HepG2 (cell line): ENCODE measurements at regions of chr3 and their contacts with region 1.

Region 1: DNA sequence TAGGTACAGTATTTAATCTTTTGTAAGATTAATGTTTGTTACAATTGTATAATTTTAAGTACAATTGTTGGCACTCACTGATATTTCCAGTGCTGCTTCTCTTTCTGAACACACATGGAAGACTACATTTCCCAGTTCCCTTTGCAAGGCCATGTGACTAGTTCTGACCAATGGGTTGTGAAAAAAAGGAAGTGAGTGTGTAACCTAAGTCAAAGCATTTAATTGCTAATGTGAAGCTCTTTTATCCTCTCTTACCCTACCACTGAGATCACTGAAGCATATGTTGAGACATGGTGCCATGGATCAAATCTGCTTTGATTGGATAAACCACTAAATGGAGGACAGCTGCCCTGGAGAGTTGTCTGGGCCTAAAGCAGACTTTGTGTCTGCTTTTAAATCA is 83.9 kb upstream of the PLXND1 start:
- DNase-seq: peak; percentile 78
- ATAC-seq: peak; percentile 66
- H3K4me3 ChIP-seq: no peak overlapping the region
- H3K27ac ChIP-seq: no peak overlapping the region
- H3K4me1 ChIP-seq: peaks cover 46% of the 10 kb centered on the region
- H3K27me3 ChIP-seq: no peaks in the 10 kb centered on the region; a peak in 1 of 5 replicates
- CTCF ChIP-seq: no peak
- EP300 ChIP-seq: no peak
- POLR2A ChIP-seq: no peak
- RAD21 ChIP-seq: no peak

Region 2: DNA sequence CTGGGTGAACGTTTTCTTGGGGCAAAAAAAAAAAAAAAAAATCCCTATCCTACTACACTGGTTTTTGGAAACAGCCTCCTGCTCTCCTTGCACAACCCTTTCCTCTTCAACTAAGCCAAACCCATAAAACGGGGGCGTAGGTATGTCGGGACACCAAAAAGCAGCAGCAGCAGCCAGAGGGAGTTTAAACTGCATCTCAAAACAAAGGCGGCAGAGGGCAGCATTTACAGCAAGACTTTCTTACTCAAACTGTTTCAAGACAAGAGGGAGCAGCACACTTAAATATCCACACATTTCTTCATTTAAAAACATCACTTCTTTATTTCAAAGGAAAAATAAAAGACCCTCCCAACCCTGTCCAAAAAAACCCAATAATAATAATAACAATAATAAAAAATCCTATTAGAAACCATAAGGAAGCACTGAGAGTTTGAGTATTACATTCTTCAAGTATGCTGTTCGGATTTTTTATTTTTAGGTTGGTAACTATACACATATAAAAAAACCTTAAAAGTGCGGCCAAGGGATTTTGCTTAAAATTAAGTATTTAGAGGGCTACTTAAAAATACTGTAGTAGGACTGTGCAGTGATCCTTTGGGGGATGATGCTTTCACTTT is 40.0 kb before region 1 on chr3:
- CTCF ChIA-PET with region 1: no interaction called
- POLR2A ChIA-PET with region 1: interaction called, 3 read pairs
- in situ Hi-C with region 1: no loop called
- intact Hi-C with region 1: loop called (anchors 5 kb)
- DNase-seq: peak; percentile 48
- ATAC-seq: no peak
- H3K4me3 ChIP-seq: no peak overlapping the region; a peak in 1 of 6 replicates
- H3K27ac ChIP-seq: no peak overlapping the region
- H3K4me1 ChIP-seq: peaks cover 50% of the 10 kb centered on the region
- H3K27me3 ChIP-seq: no peaks in the 10 kb centered on the region; a peak in 1 of 5 replicates
- CTCF ChIP-seq: peak; percentile 56
- EP300 ChIP-seq: no peak
- POLR2A ChIP-seq: peak in 1 of 2 experiments; percentile 22; a peak in 1 of 4 replicates
- RAD21 ChIP-seq: peak; percentile 37; the same call in 1 of the 2 replicates

Region 3: DNA sequence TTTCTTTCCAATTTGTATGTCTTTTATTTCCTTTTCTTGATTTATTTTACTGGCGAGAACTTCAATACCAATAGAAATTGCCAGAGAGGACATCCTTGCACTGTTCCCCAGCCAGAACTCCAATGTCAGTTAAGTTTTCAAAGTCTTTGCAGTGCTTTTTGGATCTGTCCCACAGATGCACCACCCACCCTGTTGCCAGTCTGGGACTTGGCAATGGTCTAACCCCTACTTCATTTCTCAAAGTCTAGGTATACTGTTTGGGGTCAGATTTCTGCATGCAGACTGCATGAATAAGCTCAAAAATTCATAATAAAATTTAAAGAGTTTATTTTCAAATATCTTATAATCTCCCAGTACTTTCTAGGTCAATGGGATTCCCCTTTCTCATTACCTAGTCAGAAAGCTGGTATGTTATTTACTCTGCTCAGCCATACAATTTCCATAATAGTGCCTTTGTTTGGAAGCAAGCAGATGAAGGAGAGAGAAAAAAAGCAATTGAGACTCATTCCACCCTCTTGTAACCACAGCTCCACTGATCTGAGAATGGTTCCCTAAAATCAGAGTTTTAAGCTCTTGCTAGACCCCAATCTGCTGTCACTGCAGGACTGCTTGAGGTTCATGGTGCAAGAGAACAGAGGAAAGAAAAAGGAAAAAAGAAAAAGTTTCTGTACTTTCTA is 41.9 kb after region 1 on chr3:
- CTCF ChIA-PET with region 1: no interaction called
- POLR2A ChIA-PET with region 1: interaction called, 3 read pairs
- in situ Hi-C with region 1: no loop called
- intact Hi-C with region 1: loop called (anchors 5 kb)
- DNase-seq: peak; percentile 59
- ATAC-seq: peak; percentile 64; the same call in 2 of the 3 replicates
- H3K4me3 ChIP-seq: no peak overlapping the region
- H3K27ac ChIP-seq: peak overlapping the region; percentile 7
- H3K4me1 ChIP-seq: peaks cover 24% of the 10 kb centered on the region
- H3K27me3 ChIP-seq: no peaks in the 10 kb centered on the region
- CTCF ChIP-seq: no peak
- EP300 ChIP-seq: no peak
- POLR2A ChIP-seq: no peak
- RAD21 ChIP-seq: no peak

Region 4: GRCh38 chr3:129812589-129812988 is 122.2 kb after region 1 on chr3:
- CTCF ChIA-PET with region 1: no interaction called
- POLR2A ChIA-PET with region 1: no interaction called
- in situ Hi-C with region 1: no loop called
- intact Hi-C with region 1: no loop called
- DNase-seq: no peak
- ATAC-seq: no peak
- H3K4me3 ChIP-seq: no peak overlapping the region
- H3K27ac ChIP-seq: no peak overlapping the region
- H3K4me1 ChIP-seq: 0 out of 2 replicates have a peak, but pooled peaks cover 4% of the 10 kb centered on the region
- H3K27me3 ChIP-seq: no peaks in the 10 kb centered on the region
- CTCF ChIP-seq: no peak
- EP300 ChIP-seq: no peak
- POLR2A ChIP-seq: no peak
- RAD21 ChIP-seq: no peak